ENCODE measurements at regions of chr2 and their contacts with region 1.

Region 1: GRCh38 chr2:203814661-203815540 is 52.7 kb upstream of the CTLA4 start:
- DNase-seq: peak; percentile 55
- H3K4me3 Mint-ChIP-seq: no peak overlapping the region
- H3K27ac Mint-ChIP-seq: no peak overlapping the region
- H3K4me1 Mint-ChIP-seq: peaks cover 57% of the 10 kb centered on the region
- H3K27me3 Mint-ChIP-seq: peaks cover 6% of the 10 kb centered on the region

Region 2: GRCh38 chr2:202634556-202635427 is 1180.1 kb before region 1 on chr2 and contains the start of gene FAM117B:
- CTCF ChIA-PET with region 1: no interaction called
- POLR2A ChIA-PET with region 1: no interaction called
- DNase-seq: peak; percentile 98
- H3K4me3 Mint-ChIP-seq: peak within 1 kb of the TSS; percentile 92
- H3K27ac Mint-ChIP-seq: peak within 1 kb of the TSS; percentile 79
- H3K4me1 Mint-ChIP-seq: peaks cover 40% of the 10 kb centered on the region
- H3K27me3 Mint-ChIP-seq: no peaks in the 10 kb centered on the region
- total RNA-seq, gene FAM117B: 4.3 to 5.2 TPM

Region 3: GRCh38 chr2:203453858-203454451 is 360.9 kb before region 1 on chr2:
- CTCF ChIA-PET with region 1: interaction called, 13 read pairs
- POLR2A ChIA-PET with region 1: no interaction called
- DNase-seq: no peak
- H3K4me3 Mint-ChIP-seq: no peak overlapping the region
- H3K27ac Mint-ChIP-seq: no peak overlapping the region
- H3K4me1 Mint-ChIP-seq: no peaks in the 10 kb centered on the region
- H3K27me3 Mint-ChIP-seq: no peaks in the 10 kb centered on the region

Region 4: DNA sequence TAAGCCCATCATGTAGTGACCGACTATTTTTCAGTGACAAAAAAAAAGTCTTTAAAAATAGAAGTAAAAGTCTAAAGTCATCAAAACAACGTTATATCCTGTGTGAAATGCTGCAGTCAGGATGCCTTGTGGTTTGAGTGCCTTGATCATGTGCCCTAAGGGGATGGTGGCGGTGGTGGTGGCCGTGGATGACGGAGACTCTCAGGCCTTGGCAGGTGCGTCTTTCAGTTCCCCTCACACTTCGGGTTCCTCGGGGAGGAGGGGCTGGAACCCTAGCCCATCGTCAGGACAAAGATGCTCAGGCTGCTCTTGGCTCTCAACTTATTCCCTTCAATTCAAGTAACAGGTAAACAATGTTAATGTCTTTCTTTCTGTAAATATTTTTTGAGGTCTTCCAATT is 108.5 kb before region 1 on chr2 and contains the start of gene CD28:
- CTCF ChIA-PET with region 1: interaction called, 16 read pairs
- POLR2A ChIA-PET with region 1: interaction called, 87 read pairs
- DNase-seq: peak; percentile 95
- H3K4me3 Mint-ChIP-seq: peak within 1 kb of the TSS; percentile 90
- H3K27ac Mint-ChIP-seq: peak within 1 kb of the TSS; percentile 97
- H3K4me1 Mint-ChIP-seq: peaks cover 46% of the 10 kb centered on the region
- H3K27me3 Mint-ChIP-seq: no peaks in the 10 kb centered on the region
- total RNA-seq, gene CD28: 194 to 205 TPM

Region 5: DNA sequence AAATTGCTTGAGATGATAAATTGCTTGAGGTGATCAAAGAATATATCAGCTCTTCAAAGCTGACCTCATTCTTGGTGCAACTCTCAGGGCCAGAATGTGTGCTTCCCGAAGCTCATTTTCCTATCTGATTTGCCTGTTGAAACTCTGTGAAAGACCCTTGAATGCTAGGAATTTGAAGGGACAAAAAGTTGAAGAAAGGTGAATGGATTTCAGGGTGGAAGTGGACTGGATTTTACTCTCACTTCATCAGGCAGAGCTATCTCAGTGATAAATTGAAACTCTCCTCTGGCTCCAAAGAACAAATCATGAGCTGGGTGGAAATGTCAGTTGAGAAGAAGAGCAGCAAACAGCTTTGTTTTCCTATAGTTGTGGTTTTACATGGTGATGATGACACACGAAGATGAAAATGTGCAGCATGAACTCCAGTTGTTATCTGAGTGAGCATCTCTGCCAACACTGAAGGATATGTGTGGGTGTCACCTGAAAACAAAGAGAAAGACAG is 74.1 kb before region 1 on chr2:
- CTCF ChIA-PET with region 1: interaction called, 25 read pairs
- POLR2A ChIA-PET with region 1: interaction called, 55 read pairs
- DNase-seq: peak; percentile 51
- H3K4me3 Mint-ChIP-seq: peak overlapping the region; percentile 57
- H3K27ac Mint-ChIP-seq: peak overlapping the region; percentile 95
- H3K4me1 Mint-ChIP-seq: peaks cover 82% of the 10 kb centered on the region
- H3K27me3 Mint-ChIP-seq: no peaks in the 10 kb centered on the region

Region 6: GRCh38 chr2:203871371-203871983 is 56.6 kb after region 1 on chr2:
- CTCF ChIA-PET with region 1: interaction called, 15 read pairs
- POLR2A ChIA-PET with region 1: interaction called, 129 read pairs
- DNase-seq: peak; percentile 66
- H3K4me3 Mint-ChIP-seq: peak overlapping the region; percentile 96
- H3K27ac Mint-ChIP-seq: peak overlapping the region; percentile 99
- H3K4me1 Mint-ChIP-seq: peaks cover 78% of the 10 kb centered on the region
- H3K27me3 Mint-ChIP-seq: no peaks in the 10 kb centered on the region

Region 7: GRCh38 chr2:204030322-204030721 is 215.4 kb after region 1 on chr2:
- CTCF ChIA-PET with region 1: no interaction called
- POLR2A ChIA-PET with region 1: no interaction called
- DNase-seq: no peak
- H3K4me3 Mint-ChIP-seq: no peak overlapping the region
- H3K27ac Mint-ChIP-seq: no peak overlapping the region
- H3K4me1 Mint-ChIP-seq: peaks cover 18% of the 10 kb centered on the region
- H3K27me3 Mint-ChIP-seq: no peaks in the 10 kb centered on the region

Measured in activated CD4-positive, alpha-beta memory T cell treated with anti-CD3 and anti-CD28 coated beads, Interleukin-2, amount 10 ng/mL, durations not matched to agents 7 days and 5 days (primary cell).